ENCODE measurements at regions of chr6 and their contacts with region 1.

Region 1: GRCh38 chr6:125779924-125780539 is 10.7 kb upstream of the NCOA7 start:
- DNase-seq: peak; percentile 72
- H3K4me3 Mint-ChIP-seq: no peak overlapping the region
- H3K27ac Mint-ChIP-seq: no peak overlapping the region
- H3K4me1 Mint-ChIP-seq: peaks cover 14% of the 10 kb centered on the region
- H3K27me3 Mint-ChIP-seq: peaks cover 21% of the 10 kb centered on the region

Region 2: DNA sequence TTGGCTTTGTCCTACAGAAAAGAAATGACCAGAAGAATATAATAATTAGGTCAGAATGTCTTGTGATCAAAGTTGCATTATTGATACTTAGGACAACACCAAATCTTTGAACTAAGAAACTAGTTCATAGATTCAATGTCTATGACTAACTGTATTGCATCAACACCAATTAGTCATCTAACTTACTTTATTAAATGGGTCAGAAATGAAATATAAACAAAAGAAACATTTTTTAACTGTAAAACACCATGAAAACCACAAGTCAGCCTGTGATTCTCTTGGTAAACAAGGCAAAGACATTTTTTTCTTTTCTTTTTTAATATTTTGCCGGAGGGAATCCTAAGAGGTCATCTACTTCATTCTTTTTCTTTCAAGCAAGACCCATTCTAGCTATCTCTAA is 364.1 kb before region 1 on chr6:
- intact Hi-C with region 1: no loop called
- DNase-seq: no peak
- H3K4me3 Mint-ChIP-seq: no peak overlapping the region
- H3K27ac Mint-ChIP-seq: no peak overlapping the region
- H3K4me1 Mint-ChIP-seq: no peaks in the 10 kb centered on the region
- H3K27me3 Mint-ChIP-seq: no peaks in the 10 kb centered on the region

Region 3: GRCh38 chr6:125790358-125791150 is 10.5 kb after region 1 on chr6 and contains the start of gene NCOA7:
- intact Hi-C with region 1: loop called (anchors 1 kb)
- DNase-seq: peak; percentile 76
- H3K4me3 Mint-ChIP-seq: peak within 1 kb of the TSS; percentile 92
- H3K27ac Mint-ChIP-seq: peak within 1 kb of the TSS; percentile 99
- H3K4me1 Mint-ChIP-seq: peaks cover 50% of the 10 kb centered on the region
- H3K27me3 Mint-ChIP-seq: no peaks in the 10 kb centered on the region
- total RNA-seq, gene NCOA7: 40.5 and 43.4 TPM in 2 replicates

Region 4: DNA sequence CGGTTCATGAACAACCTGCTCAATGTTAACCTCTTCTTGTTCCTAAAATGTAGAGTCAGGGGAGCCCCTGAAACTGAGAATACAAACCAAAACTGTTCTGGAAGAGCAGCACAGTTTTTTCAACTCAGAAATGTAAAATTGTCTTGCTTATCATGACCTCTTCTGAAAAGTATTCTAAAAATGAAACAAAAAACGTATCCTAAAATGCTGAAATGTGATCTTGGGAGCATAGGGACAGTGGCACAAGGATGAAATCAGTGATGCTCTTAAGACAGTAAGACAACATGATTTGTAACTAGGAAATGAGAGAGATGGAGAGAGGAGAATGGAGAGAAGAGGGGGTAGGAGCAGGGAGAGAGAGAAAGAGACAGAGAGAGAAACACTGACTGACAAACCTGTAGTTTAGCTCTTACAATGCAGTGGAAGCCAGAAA is 38.2 kb after region 1 on chr6:
- intact Hi-C with region 1: no loop called
- DNase-seq: no peak
- H3K4me3 Mint-ChIP-seq: no peak overlapping the region
- H3K27ac Mint-ChIP-seq: no peak overlapping the region
- H3K4me1 Mint-ChIP-seq: peaks cover 40% of the 10 kb centered on the region
- H3K27me3 Mint-ChIP-seq: no peaks in the 10 kb centered on the region

Region 5: GRCh38 chr6:125918681-125919566 is 138.9 kb after region 1 on chr6:
- intact Hi-C with region 1: loop called (anchors 1 kb)
- DNase-seq: peak; percentile 48
- H3K4me3 Mint-ChIP-seq: peak overlapping the region; percentile 82
- H3K27ac Mint-ChIP-seq: peak overlapping the region; percentile 88
- H3K4me1 Mint-ChIP-seq: peaks cover 46% of the 10 kb centered on the region
- H3K27me3 Mint-ChIP-seq: no peaks in the 10 kb centered on the region

Region 6: GRCh38 chr6:125974214-125974866 is 194.3 kb after region 1 on chr6:
- intact Hi-C with region 1: loop called (anchors 1 kb)
- DNase-seq: no peak
- H3K4me3 Mint-ChIP-seq: no peak overlapping the region
- H3K27ac Mint-ChIP-seq: no peak overlapping the region
- H3K4me1 Mint-ChIP-seq: peaks cover 6% of the 10 kb centered on the region
- H3K27me3 Mint-ChIP-seq: no peaks in the 10 kb centered on the region

Region 7: GRCh38 chr6:126339796-126340609 is 560.0 kb after region 1 on chr6 and contains the start of gene CENPW:
- intact Hi-C with region 1: loop called (anchors 10 kb)
- DNase-seq: peak; percentile 93
- H3K4me3 Mint-ChIP-seq: no peak within 1 kb of the TSS
- H3K27ac Mint-ChIP-seq: no peak within 1 kb of the TSS
- H3K4me1 Mint-ChIP-seq: peaks cover 25% of the 10 kb centered on the region
- H3K27me3 Mint-ChIP-seq: no peaks in the 10 kb centered on the region
- total RNA-seq, gene CENPW: 54.7 and 54.8 TPM in 2 replicates